ENCODE measurements at regions of chr15 and their contacts with region 1.

Region 1: DNA sequence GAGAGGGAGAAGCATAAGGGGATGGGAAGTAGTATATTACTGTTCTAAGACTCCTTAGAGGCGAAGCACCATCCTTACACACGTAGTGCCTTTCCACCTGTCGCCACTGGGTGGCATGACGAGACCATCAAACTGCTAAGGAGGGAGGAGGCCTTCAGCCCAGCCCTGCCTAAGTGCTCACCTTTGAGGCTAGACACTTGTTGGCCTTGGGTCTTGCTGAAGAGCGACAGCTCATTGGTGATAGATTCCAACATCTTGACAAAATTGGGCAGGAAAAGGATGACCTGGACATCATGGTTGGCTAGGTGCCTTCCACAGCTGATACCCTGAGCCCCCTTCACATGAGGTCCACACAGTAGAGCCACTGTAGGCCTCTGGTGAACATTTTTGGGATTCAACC is 19.6 kb downstream of the CLK3 start:
- DNase-seq: peak; percentile 83
- ATAC-seq: peak; percentile 87
- H3K4me3 Mint-ChIP-seq: no peak overlapping the region
- H3K27ac Mint-ChIP-seq: no peak overlapping the region
- H3K4me1 Mint-ChIP-seq: no peaks in the 10 kb centered on the region
- H3K27me3 Mint-ChIP-seq: no peaks in the 10 kb centered on the region

Region 2: DNA sequence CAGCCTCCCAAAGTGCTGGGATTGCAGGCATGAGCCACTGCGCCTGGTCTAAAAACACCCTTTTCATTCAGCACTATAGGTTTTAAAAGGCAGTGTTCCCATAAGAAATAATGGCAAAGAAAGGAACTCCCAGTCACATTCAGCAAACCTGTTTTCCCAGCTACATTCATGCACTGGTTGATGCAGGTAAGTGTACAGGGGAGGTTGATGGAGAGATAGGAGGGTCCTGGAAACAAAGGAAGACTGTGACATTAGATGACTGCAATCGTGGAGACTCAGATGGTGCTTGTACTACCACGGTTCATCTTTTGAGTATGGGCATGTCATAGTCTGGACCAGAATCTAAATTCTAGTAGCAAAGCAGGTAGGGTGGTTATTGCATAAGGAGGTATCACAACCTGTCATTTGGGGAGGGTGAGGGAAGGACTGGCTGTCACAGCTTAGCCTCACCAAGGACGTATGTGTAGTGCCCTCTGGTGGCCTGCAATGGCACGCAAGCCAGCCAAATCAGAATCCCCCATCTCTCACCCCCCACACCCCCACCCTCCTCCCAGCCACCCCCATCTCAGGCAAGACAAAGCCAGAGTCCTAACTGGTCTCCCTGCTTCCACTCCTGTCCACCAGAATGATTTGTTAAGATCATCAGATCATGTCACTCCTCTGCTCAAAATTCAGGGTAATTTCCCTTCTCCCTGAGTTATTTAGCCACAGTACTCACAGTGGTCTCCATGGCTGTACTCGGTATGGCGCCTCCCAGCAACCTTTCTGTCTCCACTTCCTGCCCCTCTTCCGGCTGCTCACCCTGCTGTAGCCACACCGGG is 145.5 kb before region 1 on chr15:
- CTCF ChIA-PET with region 1: no interaction called
- POLR2A ChIA-PET with region 1: no interaction called
- DNase-seq: peak; percentile 92
- ATAC-seq: peak; percentile 96
- H3K4me3 Mint-ChIP-seq: peak overlapping the region; percentile 73
- H3K27ac Mint-ChIP-seq: peak overlapping the region; percentile 91
- H3K4me1 Mint-ChIP-seq: peaks cover 34% of the 10 kb centered on the region
- H3K27me3 Mint-ChIP-seq: no peaks in the 10 kb centered on the region

Region 3: GRCh38 chr15:74615508-74616365 is 19.5 kb before region 1 on chr15 and contains the start of gene CLK3:
- CTCF ChIA-PET with region 1: interaction called, 228 read pairs
- POLR2A ChIA-PET with region 1: interaction called, 3 read pairs
- DNase-seq: peak; percentile 96
- ATAC-seq: peak; percentile 82
- H3K4me3 Mint-ChIP-seq: peak within 1 kb of the TSS; percentile 98
- H3K27ac Mint-ChIP-seq: peak within 1 kb of the TSS; percentile 97
- H3K4me1 Mint-ChIP-seq: peaks cover 48% of the 10 kb centered on the region
- H3K27me3 Mint-ChIP-seq: no peaks in the 10 kb centered on the region
- total RNA-seq, gene CLK3: 125 to 128 TPM

Region 4: DNA sequence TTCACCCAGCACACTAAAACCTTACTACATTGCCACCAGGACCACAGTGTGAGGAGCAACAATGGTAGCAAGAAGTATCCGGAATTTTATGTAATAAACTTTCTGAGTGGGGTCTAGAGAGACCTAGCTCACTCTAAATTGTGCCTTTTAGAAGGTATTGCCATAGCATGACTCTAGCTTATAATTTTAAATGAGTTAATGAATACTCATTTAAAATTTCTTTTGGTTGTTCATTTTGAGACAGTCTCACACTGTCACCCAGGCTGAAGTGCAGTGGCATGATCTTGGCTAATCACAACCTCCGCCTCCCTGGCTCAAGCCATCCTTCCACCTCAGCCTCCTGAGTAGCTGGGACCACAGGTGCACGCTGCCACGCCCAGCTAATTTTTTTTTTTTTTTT is 34.4 kb after region 1 on chr15:
- CTCF ChIA-PET with region 1: interaction called, 12 read pairs
- POLR2A ChIA-PET with region 1: no interaction called
- DNase-seq: no peak
- ATAC-seq: no peak
- H3K4me3 Mint-ChIP-seq: no peak overlapping the region
- H3K27ac Mint-ChIP-seq: no peak overlapping the region
- H3K4me1 Mint-ChIP-seq: peaks cover 1% of the 10 kb centered on the region
- H3K27me3 Mint-ChIP-seq: no peaks in the 10 kb centered on the region

Region 5: GRCh38 chr15:74781431-74782258 is 146.4 kb after region 1 on chr15 and contains the start of gene CSK:
- CTCF ChIA-PET with region 1: interaction called, 60 read pairs
- POLR2A ChIA-PET with region 1: interaction called, 6 read pairs
- DNase-seq: peak; percentile 82
- ATAC-seq: peak; percentile 59
- H3K4me3 Mint-ChIP-seq: peak within 1 kb of the TSS; percentile 95
- H3K27ac Mint-ChIP-seq: peak within 1 kb of the TSS; percentile 99
- H3K4me1 Mint-ChIP-seq: peaks cover 59% of the 10 kb centered on the region
- H3K27me3 Mint-ChIP-seq: no peaks in the 10 kb centered on the region
- total RNA-seq, gene CSK: 314 to 330 TPM

Region 6: GRCh38 chr15:74793135-74794028 is 158.2 kb after region 1 on chr15:
- CTCF ChIA-PET with region 1: interaction called, 33 read pairs
- POLR2A ChIA-PET with region 1: no interaction called
- DNase-seq: peak; percentile 79
- ATAC-seq: peak; percentile 31
- H3K4me3 Mint-ChIP-seq: peak overlapping the region; percentile 19
- H3K27ac Mint-ChIP-seq: peak overlapping the region; percentile 82
- H3K4me1 Mint-ChIP-seq: peaks cover 89% of the 10 kb centered on the region
- H3K27me3 Mint-ChIP-seq: no peaks in the 10 kb centered on the region

Measured in activated CD8-positive, alpha-beta T cell treated with anti-CD3 and anti-CD28 coated beads, Interleukin-2, amount 10 ng/mL, durations not matched to agents 7 days and 5 days (primary cell).